ENCODE measurements at regions of chr14 and their contacts with region 1.

Region 1: DNA sequence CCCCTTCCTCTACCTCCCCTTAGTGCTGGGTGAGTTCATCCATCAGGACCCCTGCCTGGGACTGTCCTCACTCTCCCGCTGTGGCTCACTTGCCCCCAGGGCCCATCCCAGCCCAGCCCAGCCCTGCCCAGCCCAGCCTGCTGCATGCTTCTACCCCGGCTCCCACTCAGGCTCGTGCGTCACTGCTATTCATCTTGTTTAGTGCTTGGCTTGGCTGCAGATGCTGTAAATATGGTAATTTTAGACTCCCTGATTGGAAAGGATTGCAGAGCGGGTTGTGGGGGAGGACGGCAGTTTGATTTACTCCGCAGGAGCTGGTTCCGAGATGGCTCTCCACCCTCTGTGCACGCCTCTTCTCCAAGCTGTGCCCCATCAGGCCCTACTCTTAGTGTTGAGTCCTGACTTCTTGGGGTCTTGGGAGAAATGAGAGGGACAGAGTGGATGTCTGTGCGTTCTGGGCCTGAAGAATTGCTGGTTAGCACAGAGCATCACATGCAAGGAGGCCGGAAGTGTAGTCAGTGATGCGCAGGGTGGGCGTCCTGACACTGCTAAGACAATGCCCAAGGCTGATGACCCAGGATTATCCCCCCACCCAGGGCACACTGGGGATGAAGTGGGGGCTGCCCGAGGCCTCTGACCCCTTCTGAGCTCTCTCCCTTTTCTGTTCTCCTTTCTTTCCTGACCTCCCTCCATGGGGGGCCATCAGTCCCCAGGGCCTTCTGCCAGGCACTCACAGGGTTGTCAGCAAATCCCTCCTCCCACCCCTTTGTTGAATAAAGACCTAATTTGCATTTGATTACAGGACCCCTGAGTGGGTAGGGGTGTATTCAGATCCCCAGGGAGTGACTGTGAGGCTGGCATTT is 244.4 kb downstream of the ZFP36L1 start:
- DNase-seq: peak; percentile 98
- H3K4me3 ChIP-seq: no peak overlapping the region
- H3K27ac ChIP-seq: peak overlapping the region; percentile 98
- H3K4me1 ChIP-seq: peaks cover 86% of the 10 kb centered on the region
- H3K27me3 ChIP-seq: no peaks in the 10 kb centered on the region
- CTCF ChIP-seq: no peak

Region 2: DNA sequence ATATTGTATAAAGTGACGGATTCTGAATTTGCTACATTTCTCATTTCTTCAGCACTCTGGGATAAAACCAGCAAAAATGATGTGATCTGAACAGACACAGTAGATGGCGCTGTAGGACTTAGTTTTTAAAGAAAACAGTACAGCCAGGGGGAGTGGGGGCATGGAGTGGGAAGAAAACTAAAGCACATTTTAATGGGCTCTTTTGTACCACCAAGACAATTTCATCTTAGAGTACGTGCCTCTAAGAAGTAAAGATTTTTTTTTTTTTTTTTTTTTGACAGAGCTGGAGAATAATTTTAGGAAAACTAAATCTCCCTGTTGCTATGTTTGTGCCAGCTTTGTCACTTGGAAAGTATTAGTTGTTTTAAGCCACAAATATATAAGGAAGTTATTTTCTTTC is 604.5 kb before region 1 on chr14:
- CTCF ChIA-PET with region 1: no interaction called
- dilution Hi-C with region 1: no loop called
- in situ Hi-C with region 1: loop called in 1 of 2 experiments (anchors 25 kb)
- intact Hi-C with region 1: no loop called
- DNase-seq: peak; percentile 61
- H3K4me3 ChIP-seq: no peak overlapping the region
- H3K27ac ChIP-seq: no peak overlapping the region
- H3K4me1 ChIP-seq: peaks cover 17% of the 10 kb centered on the region
- H3K27me3 ChIP-seq: no peaks in the 10 kb centered on the region
- CTCF ChIP-seq: peak; percentile 63 to 76

Region 3: GRCh38 chr14:68255697-68256203 is 292.7 kb before region 1 on chr14:
- CTCF ChIA-PET with region 1: no interaction called
- dilution Hi-C with region 1: no loop called
- in situ Hi-C with region 1: no loop called
- intact Hi-C with region 1: loop called (anchors 1 kb)
- DNase-seq: peak; percentile 77
- H3K4me3 ChIP-seq: no peak overlapping the region
- H3K27ac ChIP-seq: peak overlapping the region; percentile 38
- H3K4me1 ChIP-seq: peaks cover 29% of the 10 kb centered on the region
- H3K27me3 ChIP-seq: no peaks in the 10 kb centered on the region
- CTCF ChIP-seq: no peak

Region 4: DNA sequence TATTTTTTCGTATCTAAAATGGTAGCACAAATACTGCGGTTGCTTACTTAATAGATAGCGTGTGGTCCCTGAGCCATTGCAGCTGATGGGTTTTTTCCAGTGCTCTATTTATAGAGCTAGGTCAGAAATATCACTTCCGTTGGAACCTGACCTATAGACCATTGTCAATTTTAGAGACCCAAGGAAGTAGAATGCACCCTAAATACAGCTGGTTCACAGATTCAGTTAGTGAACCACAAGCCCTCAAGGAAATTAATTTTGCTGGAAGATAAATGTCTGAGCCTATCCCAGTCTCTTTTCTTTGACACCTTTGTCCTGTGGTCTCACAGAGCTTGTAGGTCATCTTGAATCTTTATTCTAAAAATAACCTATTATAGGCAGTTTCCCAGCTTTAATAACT is 146.6 kb before region 1 on chr14:
- CTCF ChIA-PET with region 1: no interaction called
- dilution Hi-C with region 1: no loop called
- in situ Hi-C with region 1: no loop called
- intact Hi-C with region 1: loop called (anchors 2 kb)
- DNase-seq: no peak
- H3K4me3 ChIP-seq: no peak overlapping the region
- H3K27ac ChIP-seq: peak overlapping the region; percentile 83
- H3K4me1 ChIP-seq: peaks cover 77% of the 10 kb centered on the region
- H3K27me3 ChIP-seq: no peaks in the 10 kb centered on the region
- CTCF ChIP-seq: no peak

Region 5: GRCh38 chr14:68520637-68521556 is 27.5 kb before region 1 on chr14:
- CTCF ChIA-PET with region 1: no interaction called
- dilution Hi-C with region 1: no loop called
- in situ Hi-C with region 1: no loop called
- intact Hi-C with region 1: loop called (anchors 1 kb)
- DNase-seq: peak; percentile 97
- H3K4me3 ChIP-seq: no peak overlapping the region
- H3K27ac ChIP-seq: peak overlapping the region; percentile 96
- H3K4me1 ChIP-seq: peaks cover 44% of the 10 kb centered on the region
- H3K27me3 ChIP-seq: no peaks in the 10 kb centered on the region
- CTCF ChIP-seq: no peak

Region 6: GRCh38 chr14:68676511-68676943 is 128.1 kb after region 1 on chr14:
- CTCF ChIA-PET with region 1: no interaction called
- dilution Hi-C with region 1: no loop called
- in situ Hi-C with region 1: no loop called
- intact Hi-C with region 1: loop called (anchors 1 kb)
- DNase-seq: peak; percentile 98
- H3K4me3 ChIP-seq: no peak overlapping the region
- H3K27ac ChIP-seq: peak overlapping the region; percentile 95
- H3K4me1 ChIP-seq: peaks cover 41% of the 10 kb centered on the region
- H3K27me3 ChIP-seq: no peaks in the 10 kb centered on the region
- CTCF ChIP-seq: peak in 1 of 2 donors; percentile 32

Region 7: GRCh38 chr14:68695326-68695768 is 146.9 kb after region 1 on chr14:
- CTCF ChIA-PET with region 1: no interaction called
- dilution Hi-C with region 1: no loop called
- in situ Hi-C with region 1: no loop called
- intact Hi-C with region 1: loop called (anchors 1 kb)
- DNase-seq: peak; percentile 100
- H3K4me3 ChIP-seq: no peak overlapping the region
- H3K27ac ChIP-seq: peak overlapping the region; percentile 91
- H3K4me1 ChIP-seq: peaks cover 32% of the 10 kb centered on the region
- H3K27me3 ChIP-seq: no peaks in the 10 kb centered on the region
- CTCF ChIP-seq: no peak

Region 8: DNA sequence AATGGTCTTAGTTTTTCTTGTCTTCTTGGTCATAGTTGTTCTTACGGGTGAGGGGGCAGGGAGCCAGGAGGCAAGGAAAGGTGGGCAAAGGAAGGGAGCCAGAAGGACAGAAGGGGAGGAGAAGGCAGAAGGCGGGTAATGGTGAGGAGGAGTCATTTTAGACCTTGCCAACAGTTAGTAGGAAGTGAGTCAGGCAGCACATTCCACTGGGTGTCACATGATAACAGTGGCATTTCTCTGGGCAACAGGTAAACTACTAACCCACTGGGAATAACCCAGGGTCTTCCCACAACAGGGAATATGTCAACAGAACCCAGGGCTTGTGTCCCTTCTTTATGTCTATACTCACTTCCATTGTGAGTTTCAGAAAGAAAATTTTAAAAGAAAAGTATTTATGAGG is 1512.7 kb after region 1 on chr14:
- CTCF ChIA-PET with region 1: no interaction called
- dilution Hi-C with region 1: no loop called
- in situ Hi-C with region 1: no loop called
- intact Hi-C with region 1: no loop called
- DNase-seq: peak; percentile 70
- H3K4me3 ChIP-seq: no peak overlapping the region
- H3K27ac ChIP-seq: no peak overlapping the region
- H3K4me1 ChIP-seq: peaks cover 9% of the 10 kb centered on the region
- H3K27me3 ChIP-seq: no peaks in the 10 kb centered on the region
- CTCF ChIP-seq: no peak

Measured in mammary epithelial cell (primary cell).